ENCODE measurements at regions of chr16 and their contacts with region 1.

Region 1: GRCh38 chr16:87278191-87279095 is 38.7 kb downstream of the C16orf95 start:
- DNase-seq: peak; percentile 85
- CTCF ChIP-seq: peak; percentile 87

Region 2: DNA sequence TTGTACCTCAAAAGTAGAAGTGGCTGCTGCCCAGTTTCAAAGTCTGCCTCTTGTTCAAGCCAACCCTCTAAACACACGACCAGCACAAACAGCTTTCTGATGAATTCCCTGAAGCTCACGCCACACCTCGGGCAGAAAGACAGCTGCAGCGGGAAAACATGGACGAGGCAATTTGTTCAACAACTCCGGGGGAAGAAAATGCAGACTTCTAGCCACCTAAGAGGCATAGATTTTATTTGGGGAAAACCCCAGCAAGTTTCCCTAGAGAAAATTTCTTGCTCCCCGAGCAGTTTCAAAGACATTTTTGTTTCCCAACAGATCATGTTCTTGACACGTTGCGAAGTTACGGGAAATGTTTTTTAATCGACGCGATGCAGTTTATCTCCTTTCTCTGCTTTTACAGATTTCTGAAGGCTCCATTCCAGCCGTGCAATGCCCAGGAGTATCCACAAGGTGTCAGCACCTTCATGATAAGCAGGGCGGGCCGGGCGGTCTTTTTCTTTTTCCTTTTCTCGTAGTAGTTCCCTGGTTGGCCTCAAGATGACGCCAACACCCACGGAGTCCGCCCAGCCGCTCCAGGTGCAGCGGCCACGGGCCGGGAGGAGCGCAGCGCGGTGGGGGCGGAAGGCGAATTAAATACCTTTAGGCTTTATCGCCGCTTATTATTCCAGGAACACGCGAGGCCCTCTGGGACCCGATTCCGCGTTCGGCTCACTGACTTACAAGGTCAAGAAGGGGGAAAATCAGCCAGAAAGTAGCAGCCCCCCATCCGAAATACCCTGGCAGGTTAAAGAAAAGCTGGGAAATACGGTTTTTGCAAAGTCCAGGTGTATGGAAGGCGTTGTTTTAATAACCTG is 714.7 kb before region 1 on chr16:
- CTCF ChIA-PET with region 1: interaction called, 10 read pairs
- POLR2A ChIA-PET with region 1: no interaction called
- DNase-seq: peak; percentile 89
- CTCF ChIP-seq: peak; percentile 99

Region 3: DNA sequence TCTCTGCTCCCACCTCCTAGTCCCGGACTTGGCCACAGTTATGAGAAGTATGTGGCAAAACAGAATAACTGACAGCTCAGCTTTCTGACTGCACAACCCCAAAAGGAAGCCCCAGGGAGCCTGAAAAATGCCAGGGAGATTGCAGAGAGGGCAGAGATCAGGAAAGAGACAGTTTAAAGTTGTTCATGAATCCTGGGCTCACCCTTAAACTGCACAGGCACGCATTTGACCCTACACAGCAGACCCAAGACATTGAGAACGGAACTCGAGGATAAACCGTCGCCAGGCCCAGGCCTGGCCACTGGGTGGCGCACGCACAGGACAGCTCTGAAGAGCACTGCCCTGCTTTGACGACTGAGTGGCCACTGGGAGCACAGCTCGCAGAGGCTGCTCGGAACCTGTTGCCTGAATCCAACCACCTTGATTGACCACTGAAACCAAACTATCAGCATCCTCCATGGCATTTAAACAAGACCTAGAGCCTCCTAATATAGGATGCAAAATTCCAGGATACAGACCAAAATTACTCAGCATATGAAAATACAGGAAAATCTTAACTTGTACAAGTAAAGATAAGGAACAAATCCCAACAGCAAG is 75.3 kb before region 1 on chr16:
- CTCF ChIA-PET with region 1: interaction called, 10 read pairs
- POLR2A ChIA-PET with region 1: no interaction called
- DNase-seq: peak; percentile 75
- CTCF ChIP-seq: peak; percentile 75

Measured in GM10248 (cell line).